ENCODE measurements at regions of chrX and their contacts with region 1.

Region 1: GRCh38 chrX:120380699-120381098 is 18.8 kb downstream of the ATP1B4 start:
- DNase-seq: no peak
- ATAC-seq: peak; percentile 65
- H3K4me3 Mint-ChIP-seq: no peak overlapping the region
- H3K27ac Mint-ChIP-seq: no peak overlapping the region
- H3K4me1 Mint-ChIP-seq: peaks cover 2% of the 10 kb centered on the region
- H3K27me3 Mint-ChIP-seq: peaks cover 9% of the 10 kb centered on the region
- CTCF ChIP-seq: no peak

Region 2: DNA sequence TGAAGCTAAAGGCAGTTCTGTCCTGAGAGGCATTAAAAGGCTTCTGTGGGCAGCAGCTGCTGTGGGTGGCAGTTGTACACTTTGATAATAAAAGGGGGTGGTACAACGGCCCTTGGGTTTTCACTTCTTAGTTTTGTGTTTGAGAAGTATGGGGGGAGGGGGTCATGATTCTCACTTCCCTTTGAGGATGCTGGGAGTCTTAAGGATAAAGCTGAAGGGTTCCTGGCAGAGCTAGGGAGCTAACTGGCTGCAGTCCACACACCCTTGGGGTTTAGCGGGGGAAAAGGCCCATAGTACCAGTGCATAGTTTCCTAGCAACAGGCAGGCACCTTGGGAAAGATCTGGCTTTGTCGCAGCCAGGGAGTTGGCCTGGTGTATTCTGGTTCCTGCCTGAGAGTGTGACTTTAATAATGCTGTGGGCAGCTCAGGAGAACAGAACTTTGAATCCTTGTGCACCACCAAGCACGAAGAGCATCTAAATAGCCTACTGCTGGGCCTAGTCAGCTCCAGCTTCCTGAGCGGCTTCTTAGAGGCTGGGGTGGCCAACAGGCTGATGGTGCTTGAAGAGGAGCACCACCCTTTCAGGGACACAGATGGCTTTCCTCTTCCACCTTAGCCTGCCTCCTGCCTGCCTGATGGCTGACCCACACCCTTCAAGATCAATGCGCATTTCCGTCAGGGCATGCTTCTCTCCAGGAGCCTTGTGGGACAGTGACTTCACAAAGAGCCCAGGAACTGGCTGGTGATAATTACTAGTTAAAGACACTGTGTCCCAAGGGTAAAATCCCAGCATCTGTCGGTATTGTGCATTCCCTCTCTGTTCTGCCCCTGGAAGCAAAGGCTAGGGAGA is 117.6 kb before region 1 on chrX:
- CTCF ChIA-PET with region 1: no interaction called
- POLR2A ChIA-PET with region 1: no interaction called
- intact Hi-C with region 1: no loop called
- DNase-seq: no peak
- ATAC-seq: peak; percentile 21
- H3K4me3 Mint-ChIP-seq: no peak overlapping the region
- H3K27ac Mint-ChIP-seq: peak overlapping the region; percentile 56
- H3K4me1 Mint-ChIP-seq: peaks cover 14% of the 10 kb centered on the region
- H3K27me3 Mint-ChIP-seq: no peaks in the 10 kb centered on the region
- CTCF ChIP-seq: no peak

Region 3: DNA sequence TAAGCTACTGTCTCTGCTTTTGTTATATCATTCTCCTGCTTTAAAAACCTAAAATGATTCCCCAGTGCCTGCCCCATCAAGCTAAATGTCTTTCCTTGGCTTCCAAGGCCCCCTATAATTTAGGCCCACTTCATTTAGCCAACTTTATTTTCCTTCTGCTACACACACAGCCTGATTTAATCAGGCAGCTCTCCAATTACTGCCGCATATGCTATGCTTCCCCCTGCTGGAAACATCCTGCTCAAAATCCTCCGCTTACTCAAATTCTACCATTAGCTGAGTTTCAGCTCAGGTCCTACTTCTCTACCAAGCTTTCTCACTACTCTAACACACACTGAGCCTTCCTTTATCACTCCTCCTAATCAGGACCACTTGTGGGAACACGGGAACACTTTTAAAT is 71.4 kb after region 1 on chrX:
- CTCF ChIA-PET with region 1: interaction called, 7 read pairs
- POLR2A ChIA-PET with region 1: no interaction called
- intact Hi-C with region 1: loop called (anchors 5 kb)
- DNase-seq: no peak
- ATAC-seq: no peak
- H3K4me3 Mint-ChIP-seq: no peak overlapping the region
- H3K27ac Mint-ChIP-seq: no peak overlapping the region
- H3K4me1 Mint-ChIP-seq: peaks cover 17% of the 10 kb centered on the region
- H3K27me3 Mint-ChIP-seq: no peaks in the 10 kb centered on the region
- CTCF ChIP-seq: no peak

Region 4: GRCh38 chrX:120477453-120477852 is 96.8 kb after region 1 on chrX:
- CTCF ChIA-PET with region 1: interaction called, 11 read pairs
- POLR2A ChIA-PET with region 1: no interaction called
- intact Hi-C with region 1: loop called (anchors 1 kb)
- DNase-seq: no peak
- ATAC-seq: no peak
- H3K4me3 Mint-ChIP-seq: no peak overlapping the region
- H3K27ac Mint-ChIP-seq: no peak overlapping the region
- H3K4me1 Mint-ChIP-seq: no peaks in the 10 kb centered on the region
- H3K27me3 Mint-ChIP-seq: no peaks in the 10 kb centered on the region
- CTCF ChIP-seq: no peak

Region 5: GRCh38 chrX:120664081-120664480 is 283.4 kb after region 1 on chrX:
- CTCF ChIA-PET with region 1: no interaction called
- POLR2A ChIA-PET with region 1: no interaction called
- intact Hi-C with region 1: loop called (anchors 10 kb)
- DNase-seq: no peak
- ATAC-seq: no peak
- H3K4me3 Mint-ChIP-seq: no peak overlapping the region
- H3K27ac Mint-ChIP-seq: no peak overlapping the region
- H3K4me1 Mint-ChIP-seq: peaks cover 4% of the 10 kb centered on the region
- H3K27me3 Mint-ChIP-seq: no peaks in the 10 kb centered on the region
- CTCF ChIP-seq: no peak

Measured in activated B cell treated with CpG ODN at 0.5 μM for 24 hours (primary cell).